Posterior vena cava (tissue), 2 donors: ENCODE measurements at regions of chr17 and their contacts with region 1.

Region 1: DNA sequence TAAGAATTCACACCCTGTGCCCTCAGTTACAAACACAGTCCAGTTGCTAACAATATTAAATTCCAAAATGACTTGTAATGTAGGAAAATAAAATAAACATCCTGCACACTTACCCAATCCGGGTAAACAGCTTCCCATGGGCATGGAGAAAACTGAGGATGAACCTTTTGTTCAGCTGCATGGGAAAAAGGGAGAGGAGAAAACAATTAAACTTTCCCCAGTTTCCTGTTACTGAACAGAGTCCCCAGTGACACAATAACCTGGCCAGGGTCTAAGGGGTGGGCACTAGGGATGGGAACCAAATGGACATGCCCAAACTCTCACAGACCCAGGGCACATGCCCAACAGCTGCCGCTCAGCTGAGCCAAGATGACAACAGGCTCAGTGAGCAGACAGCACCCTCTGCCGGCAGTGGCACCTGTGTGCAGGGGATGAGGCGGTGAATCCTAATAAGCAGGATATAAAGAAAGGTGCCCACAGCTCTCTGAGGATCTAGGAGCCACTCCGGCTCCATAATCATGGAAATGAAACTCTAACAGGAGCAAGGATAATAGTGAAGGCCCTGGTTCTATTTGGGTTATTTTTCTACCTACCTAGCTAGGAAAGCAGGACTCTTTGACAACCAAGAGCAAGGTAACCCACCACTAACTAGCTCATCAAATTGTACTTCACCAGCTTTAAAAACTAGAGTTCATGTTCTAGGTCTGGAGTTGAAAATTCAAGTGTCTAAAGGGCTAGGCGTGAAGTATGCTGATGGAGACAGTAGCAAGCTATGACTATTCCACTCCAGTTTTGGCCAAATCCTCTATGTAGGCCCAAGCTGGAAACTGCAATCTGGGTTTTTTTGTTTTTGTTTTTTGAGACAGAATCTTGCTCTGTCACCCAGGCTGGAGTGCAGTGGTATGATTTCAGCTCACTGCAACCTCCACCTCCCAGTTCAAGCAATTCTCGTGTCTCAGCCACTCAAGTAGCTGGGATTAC is 58.8 kb downstream of the SMG6 start:
- DNase-seq: peak; percentile 96

Region 2: DNA sequence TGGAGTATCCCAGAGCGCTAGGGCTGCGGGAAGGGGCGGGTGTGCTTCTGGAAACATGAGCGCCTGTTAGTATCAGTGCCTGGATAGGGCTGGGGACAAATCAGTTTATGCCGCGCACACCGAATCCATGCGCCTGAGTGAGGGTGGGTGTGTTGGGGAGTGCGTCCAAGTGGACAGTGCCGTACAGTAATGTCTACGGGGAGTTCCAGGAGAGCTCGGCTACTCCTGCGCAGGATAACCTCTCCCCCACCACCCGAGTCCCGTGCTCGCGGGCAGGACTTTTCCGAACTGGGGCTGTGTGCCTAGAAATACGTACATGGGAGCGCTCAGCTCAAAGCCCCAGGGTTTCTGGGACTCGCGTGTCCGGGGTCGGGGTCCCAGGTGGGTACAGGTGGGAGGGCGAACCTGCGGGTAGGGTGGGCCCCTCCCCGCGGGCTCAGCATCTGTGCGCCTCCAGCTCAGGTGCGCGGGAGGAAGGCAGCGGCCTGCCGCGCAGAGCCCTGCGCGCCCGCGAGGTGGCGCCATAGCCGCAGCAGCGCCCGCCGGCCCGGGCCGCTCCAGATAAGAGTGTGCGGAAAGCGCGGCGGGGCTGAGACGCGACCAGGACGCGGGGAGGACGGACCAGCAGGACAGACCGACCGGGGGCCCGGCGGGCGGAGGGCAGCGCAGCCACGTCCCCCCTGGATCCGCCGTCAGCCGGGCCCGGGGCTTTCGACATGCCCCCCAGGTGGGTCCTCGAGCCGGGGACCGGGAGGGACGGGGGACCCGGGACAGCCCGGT is 190.1 kb before region 1 on chr17 and contains the start of gene HIC1:
- intact Hi-C with region 1: loop called (anchors 2 kb)
- DNase-seq: peak; percentile 95
- total RNA-seq, gene HIC1: 41.3 to 64.2 TPM

Region 3: DNA sequence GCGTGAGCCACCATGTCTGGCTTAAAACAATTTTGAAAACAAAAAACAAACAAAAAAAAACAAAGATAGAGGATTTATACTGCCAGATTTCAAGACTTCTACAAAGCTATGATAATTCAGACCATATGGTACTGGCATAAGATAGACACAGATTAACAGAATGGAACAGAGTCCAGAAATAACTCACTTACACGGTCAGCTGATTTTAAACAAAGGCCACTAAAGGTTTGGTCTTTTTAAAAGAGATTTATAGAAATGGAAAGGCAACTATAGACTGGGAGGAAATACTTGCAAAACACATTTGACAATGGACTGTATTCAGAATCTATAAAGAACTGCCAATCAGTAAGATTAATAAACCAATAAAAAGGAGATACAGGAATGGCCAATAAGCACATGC is 204.7 kb after region 1 on chr17:
- intact Hi-C with region 1: no loop called
- DNase-seq: no peak